Activated T-helper 1 cell treated with anti-CD3 and anti-CD28 coated beads, Interleukin-12 subunit alpha, Interleukin-12 subunit beta, Interleukin-2, Interleukin-4 antibody, amounts not matched to agents 30 ng/mL and 10 ng/mL and 1 ng/mL, durations not matched to agents 14 hours and 24 hours and 36 hours (primary cell): ENCODE measurements at regions of chr12 and their contacts with region 1.

Region 1: DNA sequence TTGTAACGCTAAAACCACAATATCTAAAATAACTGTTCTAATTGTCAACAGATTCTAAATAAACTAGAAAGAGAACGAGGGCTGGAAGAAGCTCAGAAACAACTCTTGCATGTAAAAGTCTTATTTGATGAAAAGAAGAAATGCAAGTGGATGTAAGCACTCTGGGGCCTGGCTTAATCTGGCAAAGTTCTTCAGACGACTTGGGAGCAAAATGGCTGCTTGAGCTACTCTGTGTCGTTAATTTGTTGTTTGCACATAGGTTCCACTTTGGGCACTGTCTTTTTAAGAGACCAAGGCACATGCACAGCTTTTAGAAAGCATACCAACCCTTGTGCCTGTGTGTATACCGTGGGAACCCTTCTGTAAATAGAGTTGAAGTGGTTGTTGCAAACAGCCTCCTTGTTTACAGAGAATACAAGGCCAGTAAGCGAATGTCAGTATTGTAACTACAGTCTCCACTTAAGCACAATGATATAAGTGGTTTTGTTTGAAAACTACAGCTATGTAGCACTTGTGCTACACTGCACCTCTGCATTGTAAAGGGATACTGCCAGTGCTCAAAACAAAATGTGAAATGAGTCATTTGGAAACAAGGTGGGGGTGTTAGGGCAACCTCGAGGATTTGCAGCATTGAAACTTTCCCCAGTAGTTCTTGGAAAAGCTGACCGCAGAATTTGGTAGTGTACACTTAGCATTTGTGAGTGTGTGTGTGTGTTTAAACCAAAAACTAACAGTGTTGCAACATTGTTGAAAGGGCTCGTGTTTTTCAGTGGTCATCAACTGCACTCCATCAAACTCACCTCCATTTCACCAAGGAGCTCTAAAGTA is 154.3 kb downstream of the CEP83 start:
- DNase-seq: peak; percentile 75
- H3K4me3 Mint-ChIP-seq: peak overlapping the region; percentile 58
- H3K27ac Mint-ChIP-seq: peak overlapping the region; percentile 80
- H3K4me1 Mint-ChIP-seq: peaks cover 76% of the 10 kb centered on the region
- H3K27me3 Mint-ChIP-seq: no peaks in the 10 kb centered on the region

Region 2: GRCh38 chr12:94149119-94149780 is 156.1 kb before region 1 on chr12:
- intact Hi-C with region 1: loop called (anchors 1 kb)
- DNase-seq: peak; percentile 32
- H3K4me3 Mint-ChIP-seq: peak overlapping the region; percentile 92
- H3K27ac Mint-ChIP-seq: peak overlapping the region; percentile 55
- H3K4me1 Mint-ChIP-seq: peaks cover 44% of the 10 kb centered on the region
- H3K27me3 Mint-ChIP-seq: peaks cover 24% of the 10 kb centered on the region

Region 3: DNA sequence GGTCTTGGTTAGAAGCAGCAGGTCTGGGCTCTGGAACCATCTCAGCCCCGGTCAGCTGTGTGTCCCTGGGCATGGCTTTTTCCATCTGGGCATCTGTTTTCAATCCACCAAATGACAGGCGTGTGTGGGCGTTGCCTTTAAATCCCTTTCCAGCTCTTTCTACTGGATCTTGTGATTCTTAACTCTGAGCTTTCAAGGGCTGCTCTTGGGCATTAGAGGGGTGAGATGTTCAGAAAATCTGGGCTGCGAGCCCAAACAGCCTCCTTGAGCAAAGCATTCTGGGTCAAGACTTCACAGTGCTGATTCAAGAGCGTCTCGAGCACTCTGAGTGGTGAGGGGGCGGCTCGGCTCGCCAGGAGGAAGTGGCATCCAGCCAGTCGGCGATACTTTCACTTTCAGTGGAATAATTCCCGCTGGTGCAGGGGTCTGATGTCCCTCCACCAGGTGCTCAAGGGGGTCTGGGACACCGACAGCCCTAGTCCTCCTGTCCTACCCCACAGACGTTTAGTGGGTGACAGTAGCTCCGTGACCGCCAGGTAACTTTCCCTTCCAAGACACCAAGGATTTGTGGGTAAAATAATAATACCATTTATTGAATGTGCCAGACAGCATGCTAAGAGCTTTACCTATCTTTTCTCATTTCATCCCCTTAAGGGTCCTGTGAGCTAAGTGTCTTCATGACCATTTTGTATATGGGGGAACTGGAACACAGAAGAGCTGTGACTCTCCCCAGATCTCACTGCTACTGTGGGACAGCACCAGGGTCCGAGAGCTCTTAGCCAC is 42.9 kb before region 1 on chr12:
- intact Hi-C with region 1: loop called (anchors 1 kb)
- DNase-seq: peak; percentile 56
- H3K4me3 Mint-ChIP-seq: peak overlapping the region; percentile 84
- H3K27ac Mint-ChIP-seq: peak overlapping the region; percentile 96
- H3K4me1 Mint-ChIP-seq: peaks cover 55% of the 10 kb centered on the region
- H3K27me3 Mint-ChIP-seq: no peaks in the 10 kb centered on the region

Region 4: GRCh38 chr12:94282675-94283074 is 22.7 kb before region 1 on chr12:
- intact Hi-C with region 1: loop called (anchors 1 kb)
- DNase-seq: peak; percentile 32
- H3K4me3 Mint-ChIP-seq: peak overlapping the region; percentile 20
- H3K27ac Mint-ChIP-seq: peak overlapping the region; percentile 67
- H3K4me1 Mint-ChIP-seq: peaks cover 30% of the 10 kb centered on the region
- H3K27me3 Mint-ChIP-seq: no peaks in the 10 kb centered on the region

Region 5: DNA sequence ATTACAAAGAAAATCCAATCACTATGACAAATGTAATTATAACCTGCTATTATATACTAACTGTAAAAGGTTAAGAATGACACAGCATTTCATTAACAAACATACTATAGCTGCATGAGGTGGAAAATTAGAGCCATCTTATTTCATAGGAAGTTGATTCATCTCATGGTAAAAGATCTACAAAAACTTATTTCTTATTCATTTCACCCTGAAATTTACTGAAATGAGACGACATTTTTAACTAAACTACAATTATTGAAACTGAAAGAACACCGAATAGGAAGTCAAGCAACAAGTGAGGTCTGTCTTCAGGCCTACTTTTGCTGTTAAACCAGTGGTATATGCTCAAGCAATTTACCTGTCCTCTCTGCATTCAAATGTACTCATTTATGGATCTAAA is 67.1 kb after region 1 on chr12:
- intact Hi-C with region 1: loop called (anchors 1 kb)
- DNase-seq: no peak
- H3K4me3 Mint-ChIP-seq: peak overlapping the region; percentile 37
- H3K27ac Mint-ChIP-seq: peak overlapping the region; percentile 78
- H3K4me1 Mint-ChIP-seq: peaks cover 58% of the 10 kb centered on the region
- H3K27me3 Mint-ChIP-seq: no peaks in the 10 kb centered on the region

Region 6: DNA sequence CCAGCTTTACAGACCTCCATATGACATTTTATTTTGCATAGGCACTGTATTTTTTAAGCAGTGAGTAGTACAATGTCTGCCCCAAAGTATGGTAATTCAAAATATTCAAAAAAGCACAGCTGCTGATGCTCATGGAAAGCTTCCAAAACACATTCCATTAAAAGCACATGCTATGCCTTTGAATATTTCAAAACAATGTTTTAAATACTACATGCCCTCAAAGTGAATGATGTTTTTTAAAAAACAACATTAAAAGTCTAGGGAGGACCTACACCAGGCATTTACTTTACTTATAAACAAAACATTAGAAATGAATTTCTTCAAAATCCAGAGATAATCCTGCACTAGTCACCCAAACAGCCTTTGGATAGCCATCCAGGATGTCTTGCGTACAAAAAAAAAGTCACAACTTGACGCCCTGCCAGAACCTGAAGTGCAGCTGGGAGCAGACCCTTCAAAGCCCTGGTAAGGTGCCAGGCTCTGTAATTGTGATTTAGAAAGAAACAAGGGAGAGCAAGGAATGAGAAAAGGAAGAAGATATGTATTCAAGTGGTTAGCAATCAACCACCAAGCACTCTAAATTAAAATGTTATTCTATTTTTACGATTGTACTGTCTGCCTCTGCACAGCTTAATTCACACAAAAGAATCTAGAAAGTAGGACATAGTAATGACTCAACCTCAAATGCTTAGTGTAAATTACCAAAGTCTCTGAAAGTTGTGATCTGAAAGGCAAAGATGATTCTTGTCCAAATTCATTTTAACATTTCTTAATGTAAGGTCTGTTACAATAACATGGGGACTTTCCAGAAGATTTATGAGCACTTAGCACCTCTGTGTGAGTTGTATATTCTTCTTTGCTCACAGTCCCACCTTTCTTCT is 122.4 kb after region 1 on chr12:
- intact Hi-C with region 1: loop called (anchors 2 kb)
- DNase-seq: no peak
- H3K4me3 Mint-ChIP-seq: no peak overlapping the region
- H3K27ac Mint-ChIP-seq: peak overlapping the region; percentile 49
- H3K4me1 Mint-ChIP-seq: peaks cover 18% of the 10 kb centered on the region
- H3K27me3 Mint-ChIP-seq: no peaks in the 10 kb centered on the region

Region 7: DNA sequence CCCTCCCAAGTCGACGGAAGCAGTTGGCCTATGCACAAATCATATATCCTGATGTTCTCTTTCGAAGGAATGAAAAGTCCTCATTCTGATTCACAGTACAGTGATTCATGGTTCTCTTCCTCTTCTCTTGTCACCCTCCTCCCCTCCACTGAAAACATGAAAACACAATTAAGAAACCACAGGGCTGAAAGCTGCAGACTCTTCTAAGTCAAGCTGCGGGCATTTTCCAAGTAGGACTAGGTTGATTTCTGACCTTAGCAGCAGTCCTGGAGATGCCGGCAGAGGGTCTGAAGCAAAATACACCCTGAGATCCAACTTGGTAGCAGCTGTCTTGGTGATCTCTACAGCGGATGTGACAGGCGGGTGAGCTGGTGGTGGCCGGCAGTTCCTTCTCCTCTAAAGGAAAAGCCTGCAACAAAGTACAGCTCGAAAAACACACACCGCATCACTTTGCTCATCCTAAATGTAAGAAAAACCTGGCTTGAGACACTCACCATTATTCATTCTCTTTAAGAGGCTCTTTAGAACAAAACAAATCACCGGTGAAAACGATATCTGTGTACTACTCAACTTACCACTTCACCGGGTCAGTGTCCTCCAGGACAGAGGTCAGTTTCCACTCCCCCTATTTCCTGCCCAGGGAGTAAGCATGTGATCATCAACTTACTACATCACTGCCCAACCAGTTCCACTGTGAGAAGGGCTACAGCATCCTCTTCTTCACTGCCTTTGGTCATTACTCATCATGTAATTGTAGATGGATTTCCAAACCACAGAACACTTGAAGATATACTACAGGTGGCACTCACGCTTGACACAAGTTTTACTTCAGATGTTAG is 339.0 kb after region 1 on chr12:
- intact Hi-C with region 1: loop called (anchors 2 kb)
- DNase-seq: no peak
- H3K4me3 Mint-ChIP-seq: peak overlapping the region; percentile 63
- H3K27ac Mint-ChIP-seq: peak overlapping the region; percentile 7
- H3K4me1 Mint-ChIP-seq: peaks cover 46% of the 10 kb centered on the region
- H3K27me3 Mint-ChIP-seq: peaks cover 68% of the 10 kb centered on the region